Breast epithelium (tissue), 4 donors: ENCODE measurements at regions of chr3 and their contacts with region 1.

Region 1: GRCh38 chr3:111485086-111485485 is 56.9 kb upstream of the CD96 start:
- DNase-seq: no peak
- H3K4me3 ChIP-seq: no peak overlapping the region
- H3K27ac ChIP-seq: no peak overlapping the region
- H3K4me1 ChIP-seq: no peaks in the 10 kb centered on the region
- H3K27me3 ChIP-seq: no peaks in the 10 kb centered on the region
- CTCF ChIP-seq: no peak
- POLR2A ChIP-seq: no peak

Region 2: DNA sequence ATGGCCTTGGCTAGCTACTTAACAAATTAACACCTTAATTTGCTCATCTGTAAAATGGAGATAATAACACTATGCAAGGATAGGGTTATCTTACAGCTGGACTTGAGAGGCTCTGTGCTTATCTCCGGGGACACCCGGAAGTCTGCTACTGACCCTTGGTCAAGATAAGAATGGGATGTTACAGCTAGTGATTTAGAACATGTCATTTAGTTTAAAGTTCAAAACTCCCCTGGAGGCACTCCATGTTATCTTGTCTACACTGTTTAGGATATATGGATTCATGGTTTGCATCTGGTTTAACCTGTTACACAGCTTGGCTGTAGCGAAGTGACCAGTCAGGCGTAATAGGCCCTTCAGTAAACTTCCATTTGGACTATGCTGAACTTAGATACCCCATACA is 99.0 kb before region 1 on chr3:
- intact Hi-C with region 1: loop called (anchors 5 kb)
- DNase-seq: no peak
- H3K4me3 ChIP-seq: no peak overlapping the region
- H3K27ac ChIP-seq: no peak overlapping the region
- H3K4me1 ChIP-seq: no peaks in the 10 kb centered on the region
- H3K27me3 ChIP-seq: no peaks in the 10 kb centered on the region
- CTCF ChIP-seq: no peak
- POLR2A ChIP-seq: no peak